Dendritic cell treated with granulocyte-macrophage colony-stimulating factor and Interleukin-4, amounts not matched to agents 40 ng/mL and 50 ng/mL, for 4 days (primary cell): ENCODE measurements at regions of chr5 and their contacts with region 1.

Region 1: DNA sequence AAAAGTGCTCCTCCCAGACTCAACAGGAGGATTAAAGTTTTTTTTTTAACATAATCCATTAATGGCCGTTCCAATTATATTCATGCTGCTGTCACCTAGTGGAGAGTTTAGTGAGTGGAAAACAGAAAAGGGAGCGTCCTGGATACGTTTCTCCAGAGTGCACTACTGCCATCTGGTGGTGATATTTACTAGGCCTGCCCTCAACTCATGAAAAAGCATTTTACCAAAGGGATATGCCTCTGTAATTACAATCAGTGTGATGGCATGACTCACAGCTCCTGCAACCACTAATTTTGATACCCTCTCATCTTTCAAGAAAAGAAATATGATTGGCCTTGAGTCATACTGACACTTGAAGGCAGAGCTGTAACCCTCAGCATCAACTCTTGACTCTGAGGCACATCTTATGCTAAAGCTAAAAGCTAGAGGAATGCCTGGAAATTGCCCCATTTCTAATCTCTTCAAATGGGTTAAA is 20.0 kb downstream of the MINAR2 start:
- H3K4me3 Mint-ChIP-seq: no peak overlapping the region
- H3K27ac Mint-ChIP-seq: no peak overlapping the region
- H3K4me1 Mint-ChIP-seq: no peaks in the 10 kb centered on the region
- H3K27me3 Mint-ChIP-seq: no peaks in the 10 kb centered on the region

Region 2: DNA sequence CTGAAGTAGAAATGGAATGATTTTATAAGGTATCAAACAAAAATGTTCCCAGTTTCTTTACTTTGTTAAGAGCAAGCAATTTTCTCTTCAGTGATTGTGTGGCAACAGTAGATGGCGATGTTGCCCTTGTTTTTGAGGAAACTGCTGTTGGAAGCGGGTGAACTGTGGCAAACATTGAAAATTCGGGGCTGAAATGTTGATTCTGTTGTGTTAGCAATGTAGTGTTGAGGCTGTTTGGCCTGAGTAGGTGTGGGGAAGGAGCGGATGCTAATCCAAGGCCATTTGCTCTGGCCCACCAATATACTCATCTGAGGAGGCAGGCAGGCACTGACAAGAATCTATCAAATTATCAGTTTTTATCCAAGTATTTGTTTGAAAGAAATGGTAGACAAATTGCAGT is 1554.6 kb before region 1 on chr5:
- intact Hi-C with region 1: loop called (anchors 5 kb)
- H3K4me3 Mint-ChIP-seq: no peak overlapping the region
- H3K27ac Mint-ChIP-seq: no peak overlapping the region
- H3K4me1 Mint-ChIP-seq: no peaks in the 10 kb centered on the region
- H3K27me3 Mint-ChIP-seq: no peaks in the 10 kb centered on the region

Region 3: DNA sequence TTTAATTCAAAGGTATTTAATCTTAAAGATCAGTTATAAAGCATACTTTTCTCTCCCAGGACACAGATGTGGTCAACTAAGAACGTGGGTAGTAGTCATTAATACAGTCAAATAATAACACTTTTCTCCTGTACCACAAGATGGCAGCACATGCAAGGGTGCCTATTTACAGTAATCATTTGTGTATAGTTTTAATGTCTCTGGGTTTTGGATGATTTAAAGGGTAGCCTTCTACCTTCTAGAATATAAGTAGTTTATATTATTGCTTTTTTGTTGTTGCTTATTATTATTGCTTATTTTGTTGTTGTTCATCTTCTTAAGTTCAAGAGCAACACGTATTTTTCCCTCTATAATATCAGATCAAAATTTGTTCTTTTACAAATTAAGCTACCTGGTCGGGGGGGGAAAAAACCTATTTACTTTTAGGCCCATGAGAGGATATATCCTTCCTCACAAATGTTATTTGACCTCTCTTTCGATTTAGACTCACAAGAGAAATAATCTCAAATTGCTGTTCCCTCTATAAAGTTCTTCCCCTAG is 862.3 kb before region 1 on chr5:
- intact Hi-C with region 1: loop called (anchors 1 kb)
- H3K4me3 Mint-ChIP-seq: no peak overlapping the region
- H3K27ac Mint-ChIP-seq: no peak overlapping the region
- H3K4me1 Mint-ChIP-seq: no peaks in the 10 kb centered on the region
- H3K27me3 Mint-ChIP-seq: peaks cover 2% of the 10 kb centered on the region

Region 4: GRCh38 chr5:129691220-129691619 is 76.7 kb before region 1 on chr5:
- intact Hi-C with region 1: no loop called
- H3K4me3 Mint-ChIP-seq: no peak overlapping the region
- H3K27ac Mint-ChIP-seq: no peak overlapping the region
- H3K4me1 Mint-ChIP-seq: no peaks in the 10 kb centered on the region
- H3K27me3 Mint-ChIP-seq: no peaks in the 10 kb centered on the region

Region 5: DNA sequence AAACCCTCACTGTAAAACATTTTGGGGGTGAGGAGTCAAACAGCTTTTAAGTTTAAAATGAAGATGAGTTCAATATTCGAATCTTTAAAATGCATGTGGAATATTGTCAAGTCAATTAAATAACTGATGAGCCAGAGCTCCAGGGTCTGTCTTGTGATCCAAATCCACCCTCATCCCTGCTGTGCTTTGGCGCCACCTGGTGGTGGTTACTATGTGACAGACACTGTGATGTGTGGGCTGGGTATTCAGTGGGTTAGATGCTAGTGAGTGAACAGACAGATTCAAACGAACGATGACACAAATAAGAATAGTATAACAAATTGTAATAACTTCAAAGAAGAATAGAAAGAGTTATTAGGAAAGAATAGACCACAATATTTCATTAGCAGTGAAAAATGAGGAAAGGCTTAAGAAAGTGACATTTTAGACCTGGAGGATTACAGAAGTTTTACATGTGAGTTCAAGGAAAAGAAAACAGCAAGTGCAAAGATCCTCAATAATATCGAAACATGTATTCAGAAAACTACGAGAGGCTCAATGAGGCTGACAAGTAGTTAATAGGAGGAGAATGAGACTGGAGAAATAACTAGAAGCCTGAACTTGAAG is 84.9 kb after region 1 on chr5:
- intact Hi-C with region 1: loop called (anchors 2 kb)
- H3K4me3 Mint-ChIP-seq: no peak overlapping the region
- H3K27ac Mint-ChIP-seq: no peak overlapping the region
- H3K4me1 Mint-ChIP-seq: no peaks in the 10 kb centered on the region
- H3K27me3 Mint-ChIP-seq: peaks cover 1% of the 10 kb centered on the region

Region 6: DNA sequence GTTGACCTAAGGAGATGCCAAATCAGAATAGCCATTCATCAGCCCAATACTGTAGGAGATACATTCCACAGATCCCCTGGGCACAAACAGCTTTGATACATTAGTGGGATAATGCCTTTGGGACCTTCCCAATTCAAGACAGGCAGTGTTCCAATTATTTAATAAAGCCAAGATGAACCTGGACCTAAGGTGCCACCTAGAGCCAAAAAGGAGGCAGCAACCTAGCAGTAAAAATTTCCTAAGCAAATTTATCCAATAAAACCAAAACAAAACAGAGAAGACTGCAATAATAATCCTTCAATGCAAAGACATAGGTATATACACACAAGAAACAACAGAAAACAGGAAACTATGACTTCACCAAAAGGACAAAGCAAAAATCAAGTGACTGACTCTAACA is 1144.1 kb after region 1 on chr5:
- intact Hi-C with region 1: loop called (anchors 10 kb)
- H3K4me3 Mint-ChIP-seq: no peak overlapping the region
- H3K27ac Mint-ChIP-seq: no peak overlapping the region
- H3K4me1 Mint-ChIP-seq: no peaks in the 10 kb centered on the region
- H3K27me3 Mint-ChIP-seq: no peaks in the 10 kb centered on the region